Heart left ventricle (tissue), 16 donors: ENCODE measurements at regions of chr4 and their contacts with region 1.

Region 1: DNA sequence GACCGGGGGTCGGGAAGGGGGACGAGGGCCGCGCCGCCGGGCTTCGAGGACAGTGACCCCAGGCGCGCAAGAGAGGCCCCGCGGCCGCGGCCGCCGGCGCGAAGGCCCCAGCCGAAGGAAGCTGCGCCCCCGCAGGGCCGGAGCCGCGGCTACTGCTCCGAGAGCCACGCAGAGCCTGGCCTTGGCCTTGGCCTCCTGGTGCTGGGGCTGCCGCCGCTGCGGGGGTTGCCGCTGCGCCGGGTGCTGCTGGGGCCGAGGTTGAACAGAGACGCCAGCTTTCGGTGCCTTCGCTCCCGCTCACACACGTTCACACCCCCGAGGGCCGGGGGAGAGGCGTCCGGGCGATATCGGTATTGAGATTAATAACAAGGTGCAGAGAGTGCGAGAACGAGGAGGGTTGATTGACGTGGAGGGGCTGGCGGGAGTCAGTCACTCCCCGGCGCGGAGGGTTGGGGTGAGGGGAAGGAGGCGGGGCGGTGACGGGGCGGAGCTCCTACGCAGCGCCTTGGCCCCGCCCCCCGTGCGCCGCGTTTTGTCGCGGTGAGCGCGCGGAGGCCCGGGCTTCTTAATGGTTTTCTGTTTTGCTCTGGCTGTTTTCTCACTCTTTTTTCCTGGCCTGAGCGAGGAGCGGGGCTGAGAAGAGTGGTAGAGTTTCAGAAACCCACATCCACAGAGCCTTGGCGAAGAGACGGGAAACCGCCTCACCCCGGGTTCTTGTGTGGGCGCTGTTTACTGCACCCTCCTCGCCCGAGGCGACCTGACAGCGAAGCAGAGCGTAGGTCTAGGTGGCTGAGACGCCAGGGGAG is 878 bp upstream of the CNOT6L start:
- DNase-seq: peak; percentile 93 to 96 (median 94)
- ATAC-seq: peak; percentile 93 to 96 (median 94)
- H3K4me3 ChIP-seq: peak overlapping the region; percentile 72 to 99 (median 88)
- H3K27ac ChIP-seq: peak overlapping the region; percentile 90 to 100 (median 99)
- H3K4me1 ChIP-seq: peaks cover 0 to 48% (median 35%) of the 10 kb centered on the region in 12 donors
- H3K27me3 ChIP-seq: no peaks in the 10 kb centered on the region
- CTCF ChIP-seq: peak in 2 of 12 donors; percentile 6 to 14
- POLR2A ChIP-seq: peak; percentile 58 to 93

Region 2: GRCh38 chr4:77765720-77766119 is 54.3 kb before region 1 on chr4:
- intact Hi-C with region 1: loop called in 1 of 10 experiments (anchors 10 kb)
- DNase-seq: no peak
- ATAC-seq: no peak
- H3K4me3 ChIP-seq: no peak overlapping the region
- H3K27ac ChIP-seq: no peak overlapping the region
- H3K4me1 ChIP-seq: no peaks in the 10 kb centered on the region
- H3K27me3 ChIP-seq: no peaks in the 10 kb centered on the region
- CTCF ChIP-seq: no peak
- POLR2A ChIP-seq: no peak

Region 3: DNA sequence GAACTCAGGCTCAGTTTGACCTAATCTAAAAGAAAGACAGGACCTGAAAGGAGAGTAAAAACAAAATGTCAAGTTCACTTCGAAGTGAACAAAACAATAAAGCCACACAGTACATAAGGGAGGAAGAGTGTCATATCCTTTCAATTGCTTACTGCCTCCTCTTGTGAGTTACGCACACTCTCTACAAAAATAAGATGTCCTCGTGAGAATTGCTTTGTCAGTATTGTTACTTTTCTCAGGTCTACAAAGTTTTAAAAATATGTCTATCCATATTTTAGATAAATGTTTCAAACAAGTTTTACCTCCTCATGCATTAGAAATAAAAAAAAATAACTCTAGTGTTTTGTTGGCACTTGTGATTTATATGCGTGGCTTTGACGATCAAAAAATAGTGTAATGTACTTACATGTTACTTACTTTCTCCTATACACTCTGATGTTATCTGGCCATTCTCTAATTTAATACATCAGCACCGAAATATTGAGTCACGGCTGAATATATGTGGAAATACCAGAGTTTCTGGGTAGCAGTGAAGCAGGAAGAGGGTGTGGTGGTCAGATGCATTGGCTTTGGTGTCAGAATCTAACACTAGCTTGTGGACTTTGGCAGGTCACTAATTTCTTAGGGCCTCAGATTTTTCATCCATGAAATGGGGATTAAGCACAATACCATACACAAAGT is 34.5 kb after region 1 on chr4:
- intact Hi-C with region 1: loop called in 2 of 10 experiments (anchors 2 kb)
- DNase-seq: no peak
- ATAC-seq: peak; percentile 46 to 93 (median 74)
- H3K4me3 ChIP-seq: peak overlapping the region in 3 of 12 donors; percentile 2 to 12 (median 7)
- H3K27ac ChIP-seq: peak overlapping the region; percentile 3 to 90 (median 78)
- H3K4me1 ChIP-seq: peaks cover 0 to 40% (median 11%) of the 10 kb centered on the region in 12 donors
- H3K27me3 ChIP-seq: no peaks in the 10 kb centered on the region
- CTCF ChIP-seq: no peak
- POLR2A ChIP-seq: no peak

Region 4: DNA sequence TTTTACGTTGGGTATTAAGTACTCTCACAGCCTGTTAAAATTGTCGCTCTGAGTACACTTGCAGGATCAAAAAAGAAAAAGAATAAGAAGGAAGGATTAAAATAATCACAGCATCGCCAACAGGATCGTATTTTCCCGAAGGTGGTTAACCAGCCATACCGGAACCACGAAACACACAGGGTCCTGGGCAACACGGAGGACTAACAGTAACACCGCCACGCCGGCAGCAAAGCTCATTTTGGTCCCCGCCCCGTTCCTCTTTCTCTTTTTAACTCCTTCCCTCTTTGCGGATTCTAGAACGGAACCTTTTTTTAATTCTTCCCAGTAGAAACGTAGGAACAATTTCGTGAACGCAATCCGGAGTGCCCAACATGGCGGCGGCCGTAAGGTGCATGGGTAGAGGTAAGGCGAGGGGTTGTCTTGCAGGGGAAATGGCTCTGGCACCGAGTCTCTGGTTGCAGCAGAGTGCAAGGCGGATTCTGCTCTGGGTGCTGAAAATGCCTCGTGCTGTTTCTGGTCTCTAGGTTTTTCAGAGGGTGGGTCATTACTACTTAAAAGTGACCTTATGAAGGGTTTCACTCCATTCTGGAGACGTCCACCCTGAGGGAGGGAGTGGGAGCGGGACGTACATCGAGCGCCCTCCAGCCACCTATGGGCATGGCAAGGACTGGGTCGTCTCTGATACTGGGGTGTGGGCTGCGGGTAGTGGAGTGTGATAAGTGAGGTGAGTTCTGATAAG is 42.6 kb after region 1 on chr4 and contains the start of gene MRPL1:
- intact Hi-C with region 1: loop called (anchors 1 to 5 kb)
- DNase-seq: peak; percentile 88 to 92 (median 91)
- ATAC-seq: peak; percentile 96 to 97 (median 97)
- H3K4me3 ChIP-seq: peak within 1 kb of the TSS; percentile 30 to 90 (median 73)
- H3K27ac ChIP-seq: peak within 1 kb of the TSS; percentile 90 to 99 (median 96)
- H3K4me1 ChIP-seq: peaks cover 0 to 19% (median 11%) of the 10 kb centered on the region in 12 donors
- H3K27me3 ChIP-seq: no peaks in the 10 kb centered on the region
- CTCF ChIP-seq: peak in 3 of 12 donors; percentile 4 to 15 (median 14)
- POLR2A ChIP-seq: peak in 1 of 2 donors; percentile 42
- total RNA-seq, gene MRPL1: 26.9 to 47.6 (median 40.2) TPM

Region 5: DNA sequence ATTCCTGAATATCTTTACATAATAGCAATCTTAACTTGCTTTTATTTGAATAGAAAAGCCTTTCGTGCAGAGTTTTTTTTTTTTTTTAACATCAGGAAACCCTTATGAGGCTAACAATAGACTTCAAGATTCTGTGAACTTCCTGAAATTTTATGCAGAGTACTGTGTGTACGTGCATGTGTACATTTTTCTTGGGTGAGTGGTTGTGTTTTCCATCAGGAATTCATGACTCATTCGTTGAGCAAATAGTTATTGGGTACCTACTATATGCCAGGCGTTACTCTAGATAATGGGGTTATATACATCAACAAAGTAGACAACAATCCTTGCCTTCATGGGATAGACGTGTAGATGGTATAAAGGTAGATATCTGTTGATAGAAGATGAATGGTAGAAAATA is 101.7 kb after region 1 on chr4:
- intact Hi-C with region 1: loop called in 1 of 10 experiments (anchors 10 kb)
- DNase-seq: no peak
- ATAC-seq: peak; percentile 53 to 81 (median 70)
- H3K4me3 ChIP-seq: no peak overlapping the region
- H3K27ac ChIP-seq: peak overlapping the region; percentile 11 to 80 (median 68)
- H3K4me1 ChIP-seq: peaks cover 0 to 22% (median 4%) of the 10 kb centered on the region in 12 donors
- H3K27me3 ChIP-seq: no peaks in the 10 kb centered on the region
- CTCF ChIP-seq: no peak
- POLR2A ChIP-seq: no peak